GM12878 (cell line): ENCODE measurements at regions of chr6 and their contacts with region 1.

Region 1: DNA sequence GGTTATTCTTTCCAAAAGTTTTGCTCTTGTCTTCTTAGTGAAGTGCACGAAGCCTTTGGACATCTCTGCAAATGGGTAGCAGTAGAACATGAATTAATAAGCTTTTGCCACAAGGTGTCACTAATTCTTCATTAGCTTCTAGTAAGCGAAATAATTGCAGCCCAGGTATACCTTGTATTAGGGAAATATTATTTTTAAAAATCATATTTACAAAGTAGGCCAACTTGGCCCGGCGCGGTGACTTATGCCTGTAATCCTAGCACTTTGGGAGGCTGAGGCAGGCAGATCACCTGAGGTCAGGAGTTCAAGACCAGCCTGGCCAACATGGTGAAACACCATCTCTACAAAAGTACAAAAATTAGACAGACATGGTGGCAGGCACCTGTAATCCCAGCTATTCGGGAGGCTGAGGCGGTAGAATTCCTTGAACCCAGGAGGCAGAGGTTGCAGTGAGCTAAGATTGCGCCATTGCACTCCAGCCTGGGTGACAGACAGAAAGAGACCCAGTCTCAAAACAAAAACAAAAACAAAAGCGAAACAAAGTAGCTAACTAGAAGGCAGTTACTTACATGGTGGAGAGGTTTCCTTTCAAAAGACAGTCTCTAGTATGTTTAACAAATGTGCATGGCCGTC is 8.8 kb upstream of the RSPH3 start:
- DNase-seq: no peak
- ATAC-seq: peak; percentile 91
- H3K4me3 ChIP-seq: peak overlapping the region; percentile 60
- H3K27ac ChIP-seq: peak overlapping the region; percentile 58
- H3K4me1 ChIP-seq: no peaks in the 10 kb centered on the region
- H3K27me3 ChIP-seq: no peaks in the 10 kb centered on the region
- CTCF ChIP-seq: peak; percentile 50 to 70 (median 60); a peak in 5 of 6 replicates
- EP300 ChIP-seq: no peak
- POLR2A ChIP-seq: no peak
- RAD21 ChIP-seq: peak; percentile 78

Region 2: GRCh38 chr6:159023893-159024292 is 15.1 kb after region 1 on chr6:
- CTCF ChIA-PET with region 1: interaction called, 44 read pairs
- POLR2A ChIA-PET with region 1: no interaction called
- RAD21 ChIA-PET with region 1: interaction called, 22 read pairs
- SMC1A ChIA-PET with region 1: interaction called, 54 read pairs
- in situ Hi-C with region 1: no loop called
- intact Hi-C with region 1: no loop called
- DNase-seq: no peak
- ATAC-seq: peak; percentile 63
- H3K4me3 ChIP-seq: no peak overlapping the region
- H3K27ac ChIP-seq: no peak overlapping the region
- H3K4me1 ChIP-seq: no peaks in the 10 kb centered on the region
- H3K27me3 ChIP-seq: no peaks in the 10 kb centered on the region
- CTCF ChIP-seq: no peak
- EP300 ChIP-seq: no peak
- POLR2A ChIP-seq: no peak
- RAD21 ChIP-seq: no peak

Region 3: GRCh38 chr6:159098636-159099106 is 89.9 kb after region 1 on chr6:
- CTCF ChIA-PET with region 1: interaction called, 631 read pairs
- POLR2A ChIA-PET with region 1: interaction called, 27 read pairs
- RAD21 ChIA-PET with region 1: interaction called, 259 read pairs
- SMC1A ChIA-PET with region 1: interaction called, 517 read pairs
- in situ Hi-C with region 1: no loop called
- intact Hi-C with region 1: no loop called
- DNase-seq: no peak
- ATAC-seq: peak; percentile 52
- H3K4me3 ChIP-seq: no peak overlapping the region
- H3K27ac ChIP-seq: no peak overlapping the region
- H3K4me1 ChIP-seq: peaks cover 16% of the 10 kb centered on the region
- H3K27me3 ChIP-seq: no peaks in the 10 kb centered on the region
- CTCF ChIP-seq: no peak
- EP300 ChIP-seq: peak in 1 of 2 experiments; percentile 44; a peak in 1 of 4 replicates
- POLR2A ChIP-seq: no peak
- RAD21 ChIP-seq: no peak

Region 4: DNA sequence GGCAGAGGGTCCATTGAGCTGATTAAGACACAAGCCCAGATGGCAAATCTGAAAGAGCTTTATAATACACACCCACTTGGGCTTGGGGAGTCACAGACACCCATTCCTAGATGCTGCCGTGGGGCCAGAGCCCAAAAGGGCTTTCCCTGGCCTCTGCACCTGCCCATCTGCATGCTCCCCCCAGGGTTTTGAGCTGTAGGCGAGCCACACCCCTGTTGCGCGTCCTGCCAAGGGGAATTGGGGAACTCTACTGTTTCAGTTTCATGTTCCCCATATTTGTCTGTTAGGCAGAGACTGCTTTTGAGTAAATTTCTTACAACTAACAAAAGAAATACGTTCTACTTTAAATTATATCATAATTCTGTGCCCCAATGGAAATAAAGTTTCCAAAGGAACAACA is 107.6 kb after region 1 on chr6:
- CTCF ChIA-PET with region 1: interaction called, 631 read pairs
- POLR2A ChIA-PET with region 1: no interaction called
- RAD21 ChIA-PET with region 1: interaction called, 259 read pairs
- SMC1A ChIA-PET with region 1: interaction called, 517 read pairs
- in situ Hi-C with region 1: no loop called
- intact Hi-C with region 1: no loop called
- DNase-seq: no peak
- ATAC-seq: peak; percentile 82
- H3K4me3 ChIP-seq: no peak overlapping the region
- H3K27ac ChIP-seq: no peak overlapping the region
- H3K4me1 ChIP-seq: peaks cover 31% of the 10 kb centered on the region
- H3K27me3 ChIP-seq: peaks cover 0 to 3% of the 10 kb centered on the region in 2 experiments; a peak in 1 of 4 replicates
- CTCF ChIP-seq: no peak
- EP300 ChIP-seq: peak in 1 of 2 experiments; percentile 47; a peak in 2 of 4 replicates
- POLR2A ChIP-seq: no peak
- RAD21 ChIP-seq: no peak

Region 5: GRCh38 chr6:159134701-159135364 is 126.1 kb after region 1 on chr6:
- CTCF ChIA-PET with region 1: interaction called, 482 read pairs
- POLR2A ChIA-PET with region 1: interaction called, 6 read pairs
- RAD21 ChIA-PET with region 1: interaction called, 233 read pairs
- SMC1A ChIA-PET with region 1: interaction called, 304 read pairs
- in situ Hi-C with region 1: loop called (anchors 5 kb)
- intact Hi-C with region 1: loop called (anchors 1 kb)
- DNase-seq: peak; percentile 36
- ATAC-seq: peak; percentile 95
- H3K4me3 ChIP-seq: no peak overlapping the region
- H3K27ac ChIP-seq: no peak overlapping the region
- H3K4me1 ChIP-seq: no peaks in the 10 kb centered on the region
- H3K27me3 ChIP-seq: peaks cover 0 to 2% of the 10 kb centered on the region in 2 experiments; a peak in 1 of 4 replicates
- CTCF ChIP-seq: peak; percentile 89 to 97 (median 96)
- EP300 ChIP-seq: no peak
- POLR2A ChIP-seq: no peak
- RAD21 ChIP-seq: peak; percentile 98